ENCODE measurements at regions of chr6 and their contacts with region 1.

Region 1: GRCh38 chr6:135909737-135910387 is 58.4 kb downstream of the PDE7B start:
- DNase-seq: peak; percentile 18 to 85 (median 48)
- ATAC-seq: peak; percentile 91
- H3K4me3 ChIP-seq: no peak overlapping the region
- H3K4me3 Mint-ChIP-seq: no peak overlapping the region
- H3K27ac ChIP-seq: no peak overlapping the region
- H3K27ac Mint-ChIP-seq: no peak overlapping the region
- H3K4me1 ChIP-seq: peaks cover 3% of the 10 kb centered on the region
- H3K4me1 Mint-ChIP-seq: peaks cover 6% of the 10 kb centered on the region
- H3K27me3 ChIP-seq: no peaks in the 10 kb centered on the region
- H3K27me3 Mint-ChIP-seq: no peaks in the 10 kb centered on the region
- CTCF ChIP-seq: peak; percentile 70

Region 2: DNA sequence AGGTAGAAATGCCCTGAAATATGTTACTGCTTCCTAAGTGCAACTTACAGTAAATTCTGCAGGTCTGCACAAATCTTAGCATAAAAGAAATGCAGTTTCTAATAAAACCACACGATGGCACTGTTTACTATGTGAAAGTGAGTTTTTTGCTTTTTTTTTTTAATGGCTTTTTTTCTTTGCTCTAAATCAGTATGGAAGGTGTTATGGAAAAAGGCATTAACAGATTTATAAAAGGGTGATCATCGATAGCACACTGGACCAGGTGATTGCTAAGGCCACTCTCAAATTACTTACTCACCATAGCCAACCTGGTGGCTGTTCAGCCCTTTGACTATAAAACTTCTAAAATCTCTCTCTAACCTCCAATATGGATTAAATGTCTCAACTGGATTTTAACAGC is 458.2 kb before region 1 on chr6:
- CTCF ChIA-PET with region 1: interaction called, 6 read pairs
- POLR2A ChIA-PET with region 1: no interaction called
- intact Hi-C with region 1: loop called (anchors 2 to 5 kb)
- DNase-seq: peak in 3 of 14 experiments; percentile 42 to 66 (median 64)
- ATAC-seq: peak; percentile 54
- H3K4me3 ChIP-seq: no peak overlapping the region
- H3K4me3 Mint-ChIP-seq: no peak overlapping the region
- H3K27ac ChIP-seq: no peak overlapping the region
- H3K27ac Mint-ChIP-seq: no peak overlapping the region
- H3K4me1 ChIP-seq: no peaks in the 10 kb centered on the region
- H3K4me1 Mint-ChIP-seq: no peaks in the 10 kb centered on the region
- H3K27me3 ChIP-seq: no peaks in the 10 kb centered on the region
- H3K27me3 Mint-ChIP-seq: no peaks in the 10 kb centered on the region
- CTCF ChIP-seq: peak; percentile 86

Region 3: GRCh38 chr6:135506270-135506997 is 403.4 kb before region 1 on chr6:
- CTCF ChIA-PET with region 1: interaction called, 3 read pairs
- POLR2A ChIA-PET with region 1: no interaction called
- intact Hi-C with region 1: loop called (anchors 1 to 10 kb)
- DNase-seq: peak in 4 of 14 experiments; percentile 10 to 71 (median 66)
- ATAC-seq: peak; percentile 84
- H3K4me3 ChIP-seq: no peak overlapping the region
- H3K4me3 Mint-ChIP-seq: no peak overlapping the region
- H3K27ac ChIP-seq: no peak overlapping the region
- H3K27ac Mint-ChIP-seq: no peak overlapping the region
- H3K4me1 ChIP-seq: no peaks in the 10 kb centered on the region
- H3K4me1 Mint-ChIP-seq: no peaks in the 10 kb centered on the region
- H3K27me3 ChIP-seq: no peaks in the 10 kb centered on the region
- H3K27me3 Mint-ChIP-seq: no peaks in the 10 kb centered on the region
- CTCF ChIP-seq: peak; percentile 79

Region 4: GRCh38 chr6:135535989-135536414 is 373.9 kb before region 1 on chr6:
- CTCF ChIA-PET with region 1: interaction called, 26 read pairs
- POLR2A ChIA-PET with region 1: interaction called, 5 read pairs
- intact Hi-C with region 1: loop called (anchors 1 to 5 kb)
- DNase-seq: peak in 3 of 14 experiments; percentile 46 to 60 (median 56)
- ATAC-seq: peak; percentile 68
- H3K4me3 ChIP-seq: no peak overlapping the region
- H3K4me3 Mint-ChIP-seq: peak overlapping the region; percentile 43
- H3K27ac ChIP-seq: no peak overlapping the region
- H3K27ac Mint-ChIP-seq: no peak overlapping the region
- H3K4me1 ChIP-seq: peaks cover 5% of the 10 kb centered on the region
- H3K4me1 Mint-ChIP-seq: peaks cover 6% of the 10 kb centered on the region
- H3K27me3 ChIP-seq: no peaks in the 10 kb centered on the region
- H3K27me3 Mint-ChIP-seq: no peaks in the 10 kb centered on the region
- CTCF ChIP-seq: peak; percentile 59

Region 5: GRCh38 chr6:135675862-135676261 is 234.0 kb before region 1 on chr6:
- CTCF ChIA-PET with region 1: interaction called, 9 read pairs
- POLR2A ChIA-PET with region 1: no interaction called
- intact Hi-C with region 1: loop called (anchors 1 kb)
- DNase-seq: peak in 12 of 14 experiments; percentile 6 to 77 (median 23)
- ATAC-seq: peak; percentile 89
- H3K4me3 ChIP-seq: no peak overlapping the region
- H3K4me3 Mint-ChIP-seq: no peak overlapping the region
- H3K27ac ChIP-seq: no peak overlapping the region
- H3K27ac Mint-ChIP-seq: no peak overlapping the region
- H3K4me1 ChIP-seq: no peaks in the 10 kb centered on the region
- H3K4me1 Mint-ChIP-seq: no peaks in the 10 kb centered on the region
- H3K27me3 ChIP-seq: no peaks in the 10 kb centered on the region
- H3K27me3 Mint-ChIP-seq: no peaks in the 10 kb centered on the region
- CTCF ChIP-seq: peak; percentile 81

Region 6: GRCh38 chr6:135851442-135852271 is 58.2 kb before region 1 on chr6 and contains the start of gene PDE7B:
- CTCF ChIA-PET with region 1: interaction called, 6 read pairs
- POLR2A ChIA-PET with region 1: interaction called, 5 read pairs
- intact Hi-C with region 1: loop called (anchors 5 kb)
- DNase-seq: peak in 13 of 14 experiments; percentile 2 to 73 (median 29)
- ATAC-seq: peak; percentile 83
- H3K4me3 ChIP-seq: peak within 1 kb of the TSS; percentile 45
- H3K4me3 Mint-ChIP-seq: peak within 1 kb of the TSS; percentile 87
- H3K27ac ChIP-seq: peak within 1 kb of the TSS; percentile 16 to 32
- H3K27ac Mint-ChIP-seq: peak within 1 kb of the TSS; percentile 81
- H3K4me1 ChIP-seq: peaks cover 18% of the 10 kb centered on the region
- H3K4me1 Mint-ChIP-seq: peaks cover 26% of the 10 kb centered on the region
- H3K27me3 ChIP-seq: no peaks in the 10 kb centered on the region
- H3K27me3 Mint-ChIP-seq: no peaks in the 10 kb centered on the region
- CTCF ChIP-seq: no peak
- total RNA-seq, gene PDE7B: 0.25 to 0.34 TPM

Region 7: GRCh38 chr6:136037876-136038460 is 128.1 kb after region 1 on chr6:
- CTCF ChIA-PET with region 1: no interaction called
- POLR2A ChIA-PET with region 1: no interaction called
- intact Hi-C with region 1: no loop called
- DNase-seq: no peak
- ATAC-seq: no peak
- H3K4me3 ChIP-seq: no peak overlapping the region
- H3K4me3 Mint-ChIP-seq: no peak overlapping the region
- H3K27ac ChIP-seq: no peak overlapping the region
- H3K27ac Mint-ChIP-seq: no peak overlapping the region
- H3K4me1 ChIP-seq: no peaks in the 10 kb centered on the region
- H3K4me1 Mint-ChIP-seq: peaks cover 6% of the 10 kb centered on the region
- H3K27me3 ChIP-seq: no peaks in the 10 kb centered on the region
- H3K27me3 Mint-ChIP-seq: no peaks in the 10 kb centered on the region
- CTCF ChIP-seq: no peak

Measured in CD4-positive, alpha-beta T cell (primary cell).